ENCODE measurements at regions of chr3 and their contacts with region 1.

Region 1: DNA sequence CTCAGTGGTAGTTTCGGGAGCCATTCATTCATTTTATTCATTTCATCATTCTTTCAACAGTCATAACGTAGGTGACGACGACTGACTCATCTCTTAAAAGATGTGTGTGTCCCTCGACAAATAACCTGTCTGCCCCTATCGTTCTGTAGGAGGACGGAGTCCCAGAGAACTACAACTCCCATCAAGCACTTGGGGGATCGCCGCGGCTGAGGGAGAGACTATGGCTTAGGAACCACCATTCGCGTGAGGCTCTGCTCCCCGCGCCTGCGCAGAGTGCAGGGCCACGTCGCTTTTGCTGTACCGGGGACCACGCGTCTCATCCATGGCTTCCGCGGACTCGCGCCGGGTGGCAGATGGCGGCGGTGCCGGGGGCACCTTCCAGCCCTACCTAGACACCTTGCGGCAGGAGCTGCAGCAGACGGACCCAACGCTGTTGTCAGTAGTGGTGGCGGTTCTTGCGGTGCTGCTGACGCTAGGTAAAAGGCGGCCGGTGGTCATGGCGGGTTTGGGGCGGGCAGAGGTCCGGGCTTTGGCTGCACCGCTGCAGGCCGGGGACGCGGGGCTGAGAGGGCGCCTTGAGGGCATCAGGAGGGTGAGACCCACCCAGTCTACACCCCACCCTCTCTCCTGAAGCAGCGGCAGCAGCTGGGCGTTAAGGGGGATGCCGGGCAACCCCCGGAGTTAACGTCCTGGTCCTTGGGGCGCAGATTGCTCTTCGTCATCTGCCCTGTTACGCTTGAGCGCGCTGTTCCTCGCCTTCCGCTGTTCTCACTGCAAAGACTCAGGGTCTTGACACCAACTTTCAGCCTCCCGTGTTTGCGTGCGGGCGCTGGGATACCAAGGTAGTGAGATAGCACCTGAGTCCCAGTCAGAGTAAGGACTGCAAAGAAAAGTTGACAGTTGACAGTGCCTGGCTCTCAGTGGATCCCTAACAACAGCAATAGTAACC is at the start of gene SRPRB:
- DNase-seq: peak; percentile 91 to 96 (median 94)
- ATAC-seq: peak; percentile 98
- H3K4me3 ChIP-seq: peak within 1 kb of the TSS; percentile 76
- H3K4me3 Mint-ChIP-seq: peak within 1 kb of the TSS; percentile 90 to 99 (median 98)
- H3K27ac ChIP-seq: peak within 1 kb of the TSS; percentile 81
- H3K27ac Mint-ChIP-seq: peak within 1 kb of the TSS; percentile 70 to 98 (median 95)
- H3K4me1 ChIP-seq: peaks cover 7 to 8% of the 10 kb centered on the region in 2 donors
- H3K4me1 Mint-ChIP-seq: peaks cover 16 to 50% (median 34%) of the 10 kb centered on the region in 7 donors
- H3K27me3 ChIP-seq: no peaks in the 10 kb centered on the region
- H3K27me3 Mint-ChIP-seq: peaks cover 0 to 7% (median 5%) of the 10 kb centered on the region in 5 donors
- total RNA-seq, gene SRPRB: 27.4 to 63.3 (median 34.6) TPM

Region 2: GRCh38 chr3:132659365-132660051 is 1146.3 kb before region 1 on chr3 and contains the start of gene ACAD11:
- CTCF ChIA-PET with region 1: no interaction called
- POLR2A ChIA-PET with region 1: no interaction called
- intact Hi-C with region 1: loop called (anchors 2 to 5 kb)
- DNase-seq: peak in 7 of 9 donors; percentile 2 to 55 (median 18)
- ATAC-seq: peak; percentile 54
- H3K4me3 ChIP-seq: peak within 1 kb of the TSS; percentile 99
- H3K4me3 Mint-ChIP-seq: peak within 1 kb of the TSS; percentile 84 to 98 (median 97)
- H3K27ac ChIP-seq: peak within 1 kb of the TSS; percentile 92
- H3K27ac Mint-ChIP-seq: peak within 1 kb of the TSS; percentile 95 to 98 (median 96)
- H3K4me1 ChIP-seq: peaks cover 9 to 19% of the 10 kb centered on the region in 2 donors
- H3K4me1 Mint-ChIP-seq: peaks cover 42 to 78% (median 67%) of the 10 kb centered on the region in 7 donors
- H3K27me3 ChIP-seq: no peaks in the 10 kb centered on the region
- H3K27me3 Mint-ChIP-seq: no peaks in the 10 kb centered on the region
- total RNA-seq, gene ACAD11: 15.0 to 33.7 (median 27.5) TPM

Region 3: DNA sequence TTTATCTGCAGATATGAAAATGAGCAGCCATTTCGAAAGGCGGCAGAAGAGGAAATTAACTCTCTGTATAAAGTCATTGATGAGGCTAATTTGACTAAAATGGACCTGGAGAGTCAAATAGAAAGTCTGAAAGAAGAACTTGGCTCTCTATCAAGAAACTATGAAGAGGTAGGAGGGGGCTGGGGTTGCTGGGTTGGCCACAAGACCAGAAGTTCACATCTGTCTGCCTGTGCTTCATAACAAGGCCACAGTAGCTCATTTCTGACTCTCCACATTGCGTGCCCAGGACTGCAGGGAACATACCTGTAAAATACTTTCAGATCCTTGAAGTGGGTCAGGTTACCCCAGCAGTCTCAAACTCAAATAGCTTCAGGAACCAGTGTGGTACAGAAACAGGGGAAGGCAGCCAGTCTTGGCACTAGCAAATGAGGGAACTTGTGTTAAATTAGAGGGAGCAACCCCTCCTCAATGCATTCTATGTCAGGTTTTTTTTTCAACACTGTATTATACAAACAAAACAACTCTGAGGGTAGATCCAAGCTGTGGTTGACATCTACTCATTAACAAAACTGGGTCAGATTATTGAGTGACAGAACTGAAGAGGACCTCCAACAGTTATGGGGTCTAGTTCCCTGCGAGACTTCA is 357.2 kb before region 1 on chr3:
- CTCF ChIA-PET with region 1: no interaction called
- POLR2A ChIA-PET with region 1: no interaction called
- intact Hi-C with region 1: loop called in 1 of 2 experiments (anchors 5 kb)
- DNase-seq: peak in 1 of 9 donors; percentile 41
- ATAC-seq: peak; percentile 76
- H3K4me3 ChIP-seq: no peak overlapping the region
- H3K4me3 Mint-ChIP-seq: peak overlapping the region in 3 of 10 donors; percentile 31 to 54 (median 36)
- H3K27ac ChIP-seq: no peak overlapping the region
- H3K27ac Mint-ChIP-seq: peak overlapping the region in 8 of 9 donors; percentile 14 to 87 (median 70)
- H3K4me1 ChIP-seq: peaks cover 5 to 14% of the 10 kb centered on the region in 2 donors
- H3K4me1 Mint-ChIP-seq: peaks cover 7 to 26% (median 15%) of the 10 kb centered on the region in 7 donors
- H3K27me3 ChIP-seq: no peaks in the 10 kb centered on the region
- H3K27me3 Mint-ChIP-seq: no peaks in the 10 kb centered on the region

Region 4: GRCh38 chr3:133661454-133662277 is 144.1 kb before region 1 on chr3 and contains the start of gene TOPBP1:
- CTCF ChIA-PET with region 1: interaction called, 3 read pairs
- POLR2A ChIA-PET with region 1: no interaction called
- intact Hi-C with region 1: loop called (anchors 1 kb)
- DNase-seq: peak; percentile 68 to 88 (median 85)
- ATAC-seq: peak; percentile 90
- H3K4me3 ChIP-seq: peak within 1 kb of the TSS; percentile 80
- H3K4me3 Mint-ChIP-seq: peak within 1 kb of the TSS; percentile 90 to 99 (median 97)
- H3K27ac ChIP-seq: peak within 1 kb of the TSS; percentile 79
- H3K27ac Mint-ChIP-seq: peak within 1 kb of the TSS; percentile 93 to 99 (median 97)
- H3K4me1 ChIP-seq: peaks cover 8 to 25% of the 10 kb centered on the region in 2 donors
- H3K4me1 Mint-ChIP-seq: peaks cover 30 to 53% (median 46%) of the 10 kb centered on the region in 7 donors
- H3K27me3 ChIP-seq: no peaks in the 10 kb centered on the region
- H3K27me3 Mint-ChIP-seq: no peaks in the 10 kb centered on the region
- total RNA-seq, gene TOPBP1: 26.3 to 73.8 (median 37.6) TPM

Region 5: DNA sequence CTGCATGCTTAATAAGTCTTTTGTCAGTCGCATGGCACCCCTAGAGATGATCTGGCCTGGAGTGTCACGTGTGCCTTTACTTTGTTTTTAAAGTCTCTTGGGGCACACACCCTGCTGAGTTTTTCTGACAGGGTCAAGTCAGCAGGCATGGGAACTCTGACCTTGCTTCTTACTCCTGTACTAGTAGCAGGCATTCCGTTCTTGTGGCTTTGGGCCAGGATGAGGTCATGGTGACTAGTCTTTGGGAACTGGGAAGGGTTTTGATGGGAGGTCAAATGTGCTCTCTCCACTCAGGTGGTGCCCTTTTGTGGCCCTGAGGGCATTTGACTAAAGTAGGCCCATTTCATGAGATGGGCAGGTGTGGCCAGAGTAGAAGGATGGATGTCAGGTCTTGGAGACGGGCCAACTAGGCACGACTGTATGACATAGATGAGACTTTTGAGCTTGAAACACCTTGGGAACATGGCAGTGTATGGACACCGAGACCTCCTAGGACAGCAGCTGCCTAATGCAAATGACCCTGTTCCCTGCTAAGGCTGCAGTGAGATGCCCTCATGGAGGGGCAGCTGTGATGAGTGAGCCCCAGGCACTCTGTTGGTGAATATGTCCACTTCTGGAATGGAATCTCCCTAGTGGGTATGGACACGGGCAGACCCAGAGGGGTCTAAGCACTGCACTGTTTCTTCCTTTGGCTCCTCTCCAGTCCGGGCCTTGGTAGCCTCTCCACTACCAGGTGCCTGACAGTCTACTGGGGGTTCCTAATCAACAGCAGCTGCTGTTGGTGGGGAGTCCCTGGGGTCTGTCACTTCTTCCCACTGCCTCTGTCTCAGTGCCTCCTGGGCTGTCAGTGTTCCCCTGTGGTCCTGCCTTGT is 16.2 kb after region 1 on chr3:
- CTCF ChIA-PET with region 1: interaction called, 8 read pairs
- POLR2A ChIA-PET with region 1: no interaction called
- intact Hi-C with region 1: loop called (anchors 1 kb)
- DNase-seq: no peak
- ATAC-seq: no peak
- H3K4me3 ChIP-seq: no peak overlapping the region
- H3K4me3 Mint-ChIP-seq: no peak overlapping the region
- H3K27ac ChIP-seq: no peak overlapping the region
- H3K27ac Mint-ChIP-seq: peak overlapping the region in 2 of 9 donors; percentile 10 to 23
- H3K4me1 ChIP-seq: no peaks in the 10 kb centered on the region
- H3K4me1 Mint-ChIP-seq: peaks cover 0 to 6% (median 3%) of the 10 kb centered on the region in 7 donors
- H3K27me3 ChIP-seq: no peaks in the 10 kb centered on the region
- H3K27me3 Mint-ChIP-seq: no peaks in the 10 kb centered on the region

Region 6: DNA sequence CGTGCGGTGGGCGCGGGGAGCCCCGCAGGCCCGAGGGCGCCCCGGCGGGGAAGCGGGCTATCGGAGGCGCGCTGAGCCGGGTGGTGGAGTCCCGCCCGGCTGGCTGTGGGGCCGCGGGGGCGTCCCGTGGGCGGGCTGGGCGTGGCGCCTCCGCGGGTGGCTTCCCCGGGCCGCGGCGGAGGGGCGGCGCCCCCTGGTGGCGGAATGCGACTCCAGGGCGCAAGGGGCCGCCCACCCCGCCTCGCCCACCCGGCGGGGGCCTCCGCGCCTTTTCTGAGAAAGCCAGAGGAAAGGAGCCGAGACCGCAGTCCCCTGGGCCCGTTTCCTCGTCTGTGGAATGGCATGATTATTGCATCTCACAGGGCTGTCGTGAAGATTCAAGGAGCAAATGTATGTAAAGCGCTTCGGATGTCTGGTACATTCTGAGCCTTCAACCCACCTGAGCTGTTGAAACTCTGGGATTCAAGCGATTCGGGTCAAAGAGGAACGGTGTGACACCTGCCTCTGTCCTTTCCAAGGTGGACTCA is 121.8 kb after region 1 on chr3:
- CTCF ChIA-PET with region 1: no interaction called
- POLR2A ChIA-PET with region 1: interaction called, 3 read pairs
- intact Hi-C with region 1: loop called in 1 of 2 experiments (anchors 1 kb)
- DNase-seq: peak; percentile 64 to 88 (median 81)
- ATAC-seq: peak; percentile 97
- H3K4me3 ChIP-seq: peak overlapping the region; percentile 51
- H3K4me3 Mint-ChIP-seq: peak overlapping the region; percentile 58 to 85 (median 74)
- H3K27ac ChIP-seq: peak overlapping the region; percentile 43
- H3K27ac Mint-ChIP-seq: peak overlapping the region in 2 of 9 donors; percentile 56 to 69
- H3K4me1 ChIP-seq: peaks cover 0 to 4% of the 10 kb centered on the region in 2 donors
- H3K4me1 Mint-ChIP-seq: peaks cover 4 to 14% (median 5%) of the 10 kb centered on the region in 7 donors
- H3K27me3 ChIP-seq: peaks cover 0 to 3% of the 10 kb centered on the region in 2 donors
- H3K27me3 Mint-ChIP-seq: peaks cover 5 to 26% (median 10%) of the 10 kb centered on the region in 5 donors